ENCODE measurements at regions of chr6 and their contacts with region 1.

Region 1: GRCh38 chr6:118514689-118515088 is 33.4 kb upstream of the PLN start:
- DNase-seq: no peak
- ATAC-seq: no peak
- H3K4me3 ChIP-seq: no peak overlapping the region
- H3K27ac ChIP-seq: no peak overlapping the region
- H3K4me1 ChIP-seq: no peaks in the 10 kb centered on the region
- H3K27me3 ChIP-seq: no peaks in the 10 kb centered on the region
- CTCF ChIP-seq: no peak
- POLR2A ChIP-seq: no peak
- RAD21 ChIP-seq: no peak

Region 2: DNA sequence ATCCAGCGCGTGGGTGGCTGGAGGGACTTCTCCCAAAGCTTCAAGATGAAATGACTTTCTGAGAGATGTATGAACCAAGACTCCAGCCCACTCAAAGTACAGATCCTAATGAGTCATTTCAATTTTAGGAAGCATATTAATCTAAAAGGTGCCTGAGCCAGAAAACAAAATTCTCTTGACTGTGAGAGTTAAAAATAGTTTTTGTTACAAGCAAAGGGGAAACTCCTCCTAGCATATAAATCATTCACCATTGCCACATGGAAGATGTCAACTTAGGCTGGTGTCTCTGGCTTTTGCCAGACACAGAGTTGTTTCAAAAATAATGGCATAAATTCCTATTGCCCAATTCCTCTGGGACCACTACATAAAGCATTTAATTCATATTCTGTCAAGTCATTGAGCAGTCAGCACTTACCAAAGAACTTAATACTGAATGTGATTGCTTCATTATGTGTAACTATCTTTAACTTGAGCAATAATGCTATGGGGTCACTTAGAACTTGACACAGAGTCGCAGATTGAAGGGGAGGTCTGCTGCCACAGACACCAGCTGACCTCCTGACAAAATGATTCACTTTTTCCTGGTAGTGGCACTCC is 327.0 kb before region 1 on chr6:
- CTCF ChIA-PET with region 1: no interaction called
- POLR2A ChIA-PET with region 1: no interaction called
- dilution Hi-C with region 1: no loop called
- in situ Hi-C with region 1: no loop called
- intact Hi-C with region 1: no loop called
- DNase-seq: no peak
- ATAC-seq: no peak
- H3K4me3 ChIP-seq: no peak overlapping the region
- H3K27ac ChIP-seq: no peak overlapping the region
- H3K4me1 ChIP-seq: no peaks in the 10 kb centered on the region
- H3K27me3 ChIP-seq: no peaks in the 10 kb centered on the region
- CTCF ChIP-seq: no peak
- POLR2A ChIP-seq: no peak
- RAD21 ChIP-seq: no peak

Region 3: GRCh38 chr6:118297821-118298220 is 216.9 kb before region 1 on chr6:
- CTCF ChIA-PET with region 1: no interaction called
- POLR2A ChIA-PET with region 1: no interaction called
- dilution Hi-C with region 1: no loop called
- in situ Hi-C with region 1: no loop called
- intact Hi-C with region 1: no loop called
- DNase-seq: no peak
- ATAC-seq: no peak
- H3K4me3 ChIP-seq: no peak overlapping the region
- H3K27ac ChIP-seq: peak overlapping the region; percentile 45; the same call in 1 of the 2 replicates
- H3K4me1 ChIP-seq: peaks cover 11% of the 10 kb centered on the region
- H3K27me3 ChIP-seq: no peaks in the 10 kb centered on the region
- CTCF ChIP-seq: no peak
- POLR2A ChIP-seq: no peak
- RAD21 ChIP-seq: no peak

Region 4: GRCh38 chr6:118317581-118318563 is 196.8 kb before region 1 on chr6:
- CTCF ChIA-PET with region 1: no interaction called
- POLR2A ChIA-PET with region 1: no interaction called
- dilution Hi-C with region 1: no loop called
- in situ Hi-C with region 1: no loop called
- intact Hi-C with region 1: no loop called
- DNase-seq: peak; percentile 66
- ATAC-seq: peak; percentile 80
- H3K4me3 ChIP-seq: no peak overlapping the region
- H3K27ac ChIP-seq: peak overlapping the region; percentile 47; the same call in 1 of the 2 replicates
- H3K4me1 ChIP-seq: peaks cover 11% of the 10 kb centered on the region
- H3K27me3 ChIP-seq: no peaks in the 10 kb centered on the region
- CTCF ChIP-seq: no peak
- POLR2A ChIP-seq: no peak
- RAD21 ChIP-seq: no peak

Region 5: GRCh38 chr6:118485601-118486550 is 28.8 kb before region 1 on chr6:
- CTCF ChIA-PET with region 1: no interaction called
- POLR2A ChIA-PET with region 1: no interaction called
- dilution Hi-C with region 1: no loop called
- in situ Hi-C with region 1: no loop called
- intact Hi-C with region 1: no loop called
- DNase-seq: peak; percentile 34
- ATAC-seq: peak; percentile 37; the same call in 1 of the 2 replicates
- H3K4me3 ChIP-seq: no peak overlapping the region
- H3K27ac ChIP-seq: no peak overlapping the region
- H3K4me1 ChIP-seq: no peaks in the 10 kb centered on the region; the same call in 1 of the 2 replicates
- H3K27me3 ChIP-seq: no peaks in the 10 kb centered on the region
- CTCF ChIP-seq: no peak
- POLR2A ChIP-seq: no peak
- RAD21 ChIP-seq: no peak

Region 6: GRCh38 chr6:119259027-119259426 is 744.3 kb after region 1 on chr6:
- CTCF ChIA-PET with region 1: no interaction called
- POLR2A ChIA-PET with region 1: interaction called, 10 read pairs
- dilution Hi-C with region 1: no loop called
- in situ Hi-C with region 1: no loop called
- intact Hi-C with region 1: no loop called
- DNase-seq: no peak
- ATAC-seq: no peak
- H3K4me3 ChIP-seq: no peak overlapping the region
- H3K27ac ChIP-seq: no peak overlapping the region
- H3K4me1 ChIP-seq: peaks cover 2% of the 10 kb centered on the region; the same call in 1 of the 2 replicates
- H3K27me3 ChIP-seq: no peaks in the 10 kb centered on the region
- CTCF ChIP-seq: no peak
- POLR2A ChIP-seq: no peak
- RAD21 ChIP-seq: no peak